Right ventricle myocardium inferior (tissue), 1 donor: ENCODE measurements at regions of chr12 and their contacts with region 1.

Region 1: GRCh38 chr12:64181504-64182291 is 40.4 kb downstream of the KICS2 start:
- DNase-seq: no peak
- ATAC-seq: peak; percentile 90

Region 2: GRCh38 chr12:63792338-63792737 is 389.4 kb before region 1 on chr12:
- intact Hi-C with region 1: no loop called
- DNase-seq: no peak
- ATAC-seq: no peak

Region 3: GRCh38 chr12:64099397-64099796 is 82.3 kb before region 1 on chr12:
- intact Hi-C with region 1: loop called (anchors 10 kb)
- DNase-seq: no peak
- ATAC-seq: peak; percentile 83

Region 4: GRCh38 chr12:64256166-64256800 is 74.6 kb after region 1 on chr12:
- intact Hi-C with region 1: loop called (anchors 5 kb)
- DNase-seq: no peak
- ATAC-seq: peak; percentile 32

Region 5: DNA sequence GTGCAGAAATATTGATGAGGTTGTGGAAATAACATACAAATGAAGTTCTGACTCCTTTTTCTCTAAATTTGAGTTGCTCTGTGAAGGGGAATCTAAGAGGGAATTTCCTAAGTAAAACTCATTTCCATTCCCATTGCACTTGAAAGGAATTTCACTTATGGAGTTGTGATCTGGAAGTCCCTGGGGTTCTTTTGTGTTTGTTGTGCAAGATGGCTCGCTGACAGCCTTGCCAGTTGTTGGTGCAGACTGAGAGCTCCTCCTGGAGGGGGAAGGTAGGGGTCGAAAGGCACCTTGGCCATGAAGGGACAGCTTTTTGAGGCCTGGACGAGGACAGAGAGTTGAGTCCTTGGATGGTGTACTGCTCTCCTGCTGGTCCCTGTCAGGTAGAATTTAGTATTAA is 136.9 kb after region 1 on chr12:
- intact Hi-C with region 1: no loop called
- DNase-seq: no peak
- ATAC-seq: no peak